Right ventricle myocardium inferior (tissue), 1 donor: ENCODE measurements at regions of chr1 and their contacts with region 1.

Region 1: DNA sequence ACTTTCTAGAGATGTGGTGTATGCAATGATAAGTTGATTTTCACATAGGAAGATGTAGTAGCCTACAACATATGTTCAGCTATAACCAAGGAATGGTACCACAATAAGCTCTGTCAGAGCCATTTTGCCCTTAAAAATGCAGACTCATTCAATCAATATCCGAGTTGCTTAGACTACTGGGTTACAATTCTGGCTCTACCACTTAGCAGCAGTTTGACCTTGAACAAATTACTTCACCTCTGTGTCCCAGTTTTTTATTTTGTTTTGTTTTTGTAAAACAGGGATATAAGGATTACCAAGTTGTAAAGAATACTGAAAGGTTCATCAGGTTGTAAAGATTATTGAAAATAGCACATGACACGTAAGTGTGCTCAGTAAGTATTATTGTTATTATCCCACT is 9.3 kb downstream of the EPS15 start:
- DNase-seq: no peak
- ATAC-seq: no peak

Region 2: DNA sequence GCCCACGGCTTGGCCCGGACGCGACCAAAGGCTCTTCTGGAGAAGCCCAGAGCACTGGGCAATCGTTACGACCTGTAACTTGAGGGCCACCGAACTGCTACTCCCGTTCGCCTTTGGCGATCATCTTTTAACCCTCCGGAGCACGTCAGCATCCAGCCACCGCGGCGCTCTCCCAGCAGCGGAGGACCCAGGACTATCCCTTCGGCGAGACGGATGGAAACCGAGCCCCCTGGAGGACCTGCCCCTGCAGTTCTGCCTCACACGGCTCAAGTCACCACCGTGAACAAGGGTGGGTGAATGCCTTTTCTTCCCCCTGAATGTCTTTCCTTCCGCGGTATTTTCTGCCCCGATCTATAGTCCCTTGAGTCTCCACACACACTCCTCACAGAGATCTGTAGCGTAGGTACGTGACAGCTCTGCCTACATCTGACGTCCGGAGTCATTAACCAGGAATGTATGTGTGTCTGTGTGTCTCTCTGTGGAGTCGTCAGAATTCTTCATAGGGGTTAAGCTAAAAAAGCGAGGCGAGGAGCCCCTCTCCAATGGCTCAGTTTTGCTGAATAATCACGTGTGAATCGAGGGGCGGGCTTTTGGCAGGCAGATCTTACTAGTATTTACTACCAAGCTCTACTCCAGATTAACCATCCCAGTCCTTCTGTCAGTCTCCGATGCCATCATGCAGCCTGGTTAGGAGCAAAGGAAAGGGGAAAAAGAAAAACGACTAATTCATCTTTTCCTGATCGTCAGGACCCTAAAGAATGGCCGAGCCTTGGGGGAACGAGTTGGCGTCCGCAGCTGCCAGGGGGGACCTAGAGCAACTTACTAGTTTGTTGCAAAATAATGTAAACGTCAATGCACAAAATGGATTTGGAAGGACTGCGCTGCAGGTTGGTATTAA is 539.9 kb before region 1 on chr1 and contains the start of gene CDKN2C:
- intact Hi-C with region 1: no loop called
- DNase-seq: peak; percentile 85
- ATAC-seq: peak; percentile 19
- total RNA-seq, gene CDKN2C: 15.2 TPM

Region 3: GRCh38 chr1:51491166-51491981 is 18.4 kb before region 1 on chr1:
- intact Hi-C with region 1: loop called (anchors 2 kb)
- DNase-seq: no peak
- ATAC-seq: no peak

Region 4: DNA sequence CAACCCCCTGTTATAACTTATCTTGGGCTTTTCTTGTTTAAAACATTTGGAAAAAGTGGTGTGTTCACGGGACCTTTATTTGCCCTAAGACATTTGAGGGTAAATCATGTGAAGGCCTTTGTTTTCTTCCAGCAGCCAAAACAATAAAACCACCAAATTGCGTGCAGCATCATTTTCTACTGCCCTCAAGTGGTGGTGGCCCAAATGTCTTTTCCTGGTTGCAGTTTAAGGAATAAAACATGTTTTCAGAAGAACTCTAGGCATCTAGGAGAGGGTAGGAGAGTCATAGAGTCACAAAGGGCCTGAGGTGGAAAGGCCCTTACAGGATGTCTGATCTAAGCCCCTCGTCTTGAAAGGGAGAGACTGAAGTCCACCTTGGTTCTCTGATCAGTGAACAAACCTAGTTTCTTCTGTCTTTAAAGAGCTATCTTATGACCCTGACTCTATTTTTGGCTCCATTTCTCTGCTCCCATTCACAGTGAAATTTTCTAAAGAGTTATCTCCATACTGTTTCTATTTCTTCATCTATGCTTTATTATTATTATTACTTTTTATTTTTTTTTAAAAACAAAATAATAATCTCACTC is 25.3 kb after region 1 on chr1:
- intact Hi-C with region 1: no loop called
- DNase-seq: no peak
- ATAC-seq: peak; percentile 62

Region 5: DNA sequence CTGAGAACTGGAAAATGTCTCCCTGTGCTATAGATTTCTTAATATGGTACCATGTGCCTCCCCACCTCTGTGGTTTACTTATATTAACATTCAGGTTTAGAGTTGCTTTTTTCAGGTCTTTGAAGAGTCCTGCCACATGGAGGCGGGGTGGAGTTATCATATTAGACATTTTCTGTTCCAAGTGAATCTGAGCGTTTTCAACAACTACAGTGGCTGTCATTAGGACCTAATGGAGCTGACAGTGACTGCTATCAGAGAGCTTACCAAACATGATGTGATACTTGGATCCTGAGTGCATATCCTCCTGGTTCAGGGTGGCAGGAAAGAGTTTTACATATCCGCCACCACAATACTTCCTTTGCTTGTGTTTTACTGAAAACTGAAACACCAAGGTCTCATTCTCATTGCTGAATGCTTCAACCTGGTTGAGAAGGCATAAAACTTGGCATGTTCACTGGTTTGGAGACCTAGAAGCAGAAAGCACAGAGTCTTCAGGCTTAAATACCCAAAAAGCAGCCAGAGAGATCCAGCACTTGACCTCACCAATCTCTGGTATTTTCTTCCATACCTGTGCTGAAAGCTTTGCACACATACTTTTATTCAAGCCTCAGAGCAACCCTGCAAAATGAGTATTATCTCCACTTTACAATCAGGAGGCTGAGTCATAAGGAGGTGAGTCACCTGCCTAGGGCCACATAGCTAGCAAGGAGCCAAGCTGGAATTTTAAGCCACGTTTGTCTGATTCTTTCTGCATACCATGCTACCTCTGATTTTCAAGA is 59.7 kb after region 1 on chr1:
- intact Hi-C with region 1: no loop called
- DNase-seq: no peak
- ATAC-seq: peak; percentile 40